ENCODE measurements at regions of chr2 and their contacts with region 1.

Region 1: DNA sequence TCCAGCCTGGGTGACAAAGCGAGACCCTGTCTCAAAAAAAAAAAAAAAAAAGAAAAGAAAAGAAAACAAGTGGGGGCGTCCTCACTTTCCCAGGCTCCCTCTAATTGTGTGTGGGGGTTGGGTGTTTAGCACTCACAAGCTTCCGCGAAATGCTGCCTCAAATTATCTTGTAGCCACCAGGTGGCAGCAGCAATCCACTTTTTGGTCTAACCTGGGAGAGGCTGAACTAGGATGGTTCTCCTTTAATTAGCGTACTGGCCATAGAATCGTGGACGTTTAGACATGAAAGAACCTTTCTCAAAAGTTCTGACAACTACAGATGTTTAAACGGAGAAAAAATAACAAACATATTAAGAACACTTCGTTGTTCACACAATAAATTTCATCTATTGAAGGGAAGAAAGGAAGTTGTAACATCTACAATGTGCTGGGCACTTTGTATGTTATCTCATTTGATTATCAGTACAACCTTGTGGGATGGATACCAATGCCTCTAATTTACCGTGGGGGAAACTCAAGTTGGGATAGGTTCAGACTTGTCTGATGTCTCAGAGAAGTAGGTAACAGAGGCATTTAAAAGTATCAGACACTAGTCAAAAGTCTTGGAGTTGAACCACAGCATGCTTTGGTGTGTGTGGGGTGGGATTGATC is 122.7 kb upstream of the NABP1 start:
- DNase-seq: peak; percentile 27 to 90
- H3K4me3 ChIP-seq: no peak overlapping the region
- H3K27ac ChIP-seq: no peak overlapping the region
- H3K4me1 ChIP-seq: peaks cover 0 to 5% of the 10 kb centered on the region in 2 donors
- H3K27me3 ChIP-seq: no peaks in the 10 kb centered on the region
- CTCF ChIP-seq: peak; percentile 46 to 73 (median 55)

Region 2: GRCh38 chr2:191811807-191812602 is 256.8 kb after region 1 on chr2:
- intact Hi-C with region 1: loop called (anchors 2 kb)
- DNase-seq: peak in 1 of 2 donors; percentile 67
- H3K4me3 ChIP-seq: no peak overlapping the region
- H3K27ac ChIP-seq: no peak overlapping the region
- H3K4me1 ChIP-seq: no peaks in the 10 kb centered on the region
- H3K27me3 ChIP-seq: no peaks in the 10 kb centered on the region
- CTCF ChIP-seq: peak; percentile 57 to 80 (median 73)

Region 3: GRCh38 chr2:192513575-192513974 is 958.4 kb after region 1 on chr2:
- intact Hi-C with region 1: no loop called
- DNase-seq: no peak
- H3K4me3 ChIP-seq: no peak overlapping the region
- H3K27ac ChIP-seq: no peak overlapping the region
- H3K4me1 ChIP-seq: no peaks in the 10 kb centered on the region
- H3K27me3 ChIP-seq: no peaks in the 10 kb centered on the region
- CTCF ChIP-seq: no peak